ENCODE measurements at regions of chr9 and their contacts with region 1.

Region 1: DNA sequence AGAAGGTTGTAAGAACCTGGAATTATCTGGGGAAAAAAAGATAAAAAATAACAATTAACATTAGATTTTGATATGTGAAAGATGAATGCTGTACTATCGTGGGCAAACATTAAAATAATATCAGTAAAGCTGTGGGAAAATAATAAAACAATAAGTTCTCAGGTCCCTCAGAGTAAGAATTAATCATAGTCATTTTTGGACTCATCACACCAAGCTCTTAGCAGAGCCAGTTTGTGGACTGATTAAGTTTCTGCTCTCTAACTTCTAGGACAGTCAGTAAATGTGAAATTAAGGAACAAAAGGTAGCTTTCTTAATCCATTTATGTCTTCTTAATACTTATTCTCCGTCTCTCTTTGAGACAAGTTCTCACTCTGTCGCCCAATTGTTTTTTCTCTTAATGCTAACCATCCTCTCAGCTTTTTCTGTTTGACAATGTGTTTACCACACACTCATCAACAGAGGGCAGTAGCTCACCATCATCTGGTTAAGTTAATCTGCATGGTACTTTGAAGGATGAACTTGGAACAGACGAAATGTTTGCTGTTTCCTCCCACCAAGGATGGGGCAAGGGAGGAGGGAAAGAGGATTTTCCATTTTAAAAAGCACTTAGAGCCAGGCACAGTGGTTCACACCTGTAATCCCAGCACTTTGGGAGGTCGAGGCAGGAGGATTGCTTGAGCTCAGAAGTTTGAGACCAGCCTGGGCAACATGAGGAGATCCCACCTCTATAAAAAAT is 5.3 kb upstream of the ACO1 start:
- DNase-seq: no peak
- ATAC-seq: peak; percentile 84 to 85
- H3K4me3 ChIP-seq: no peak overlapping the region
- H3K27ac ChIP-seq: no peak overlapping the region
- H3K4me1 ChIP-seq: no peaks in the 10 kb centered on the region
- H3K27me3 ChIP-seq: peaks cover 2% of the 10 kb centered on the region

Region 2: GRCh38 chr9:32180597-32180996 is 198.6 kb before region 1 on chr9:
- intact Hi-C with region 1: no loop called
- DNase-seq: no peak
- ATAC-seq: peak; percentile 62 to 80
- H3K4me3 ChIP-seq: no peak overlapping the region
- H3K27ac ChIP-seq: no peak overlapping the region
- H3K4me1 ChIP-seq: no peaks in the 10 kb centered on the region
- H3K27me3 ChIP-seq: no peaks in the 10 kb centered on the region

Region 3: DNA sequence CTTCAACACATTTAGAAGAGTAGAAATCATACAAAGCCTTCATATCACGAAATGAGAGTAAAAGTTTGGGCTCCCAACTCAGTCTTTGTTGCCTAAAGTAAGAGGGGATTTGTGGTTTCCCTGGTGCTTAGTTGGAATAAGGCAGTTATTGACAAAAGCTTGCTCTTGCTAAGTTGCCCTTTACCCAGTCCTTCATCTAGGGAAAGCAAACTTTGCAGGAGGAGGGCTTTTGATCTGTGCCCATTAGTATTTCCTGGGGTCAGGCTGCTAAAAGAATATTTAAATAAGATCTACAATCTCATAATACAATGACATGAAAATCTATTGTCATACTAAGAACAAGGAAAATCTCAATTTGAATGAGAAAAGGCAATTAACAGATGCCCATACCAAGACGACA is 78.8 kb before region 1 on chr9:
- intact Hi-C with region 1: no loop called
- DNase-seq: no peak
- ATAC-seq: no peak
- H3K4me3 ChIP-seq: no peak overlapping the region
- H3K27ac ChIP-seq: no peak overlapping the region
- H3K4me1 ChIP-seq: no peaks in the 10 kb centered on the region
- H3K27me3 ChIP-seq: no peaks in the 10 kb centered on the region

Region 4: DNA sequence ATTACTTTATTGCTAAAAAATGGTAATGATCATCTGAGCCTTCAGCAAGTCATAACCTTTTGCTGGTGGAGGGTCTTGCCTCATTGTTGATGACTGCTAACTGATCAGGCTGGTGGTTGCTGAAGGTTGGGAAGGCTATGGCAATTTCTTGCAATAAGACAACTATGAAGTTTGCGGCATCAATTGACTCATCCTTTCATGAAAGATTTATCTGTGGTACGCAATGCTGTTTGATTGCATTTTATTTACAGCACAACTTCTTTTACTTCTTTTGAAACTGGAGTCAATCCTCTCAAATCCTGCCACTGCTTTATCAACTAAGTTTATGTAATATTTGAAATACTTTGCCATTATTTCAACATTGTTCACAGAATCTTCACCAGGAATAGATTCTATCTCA is 53.0 kb before region 1 on chr9:
- intact Hi-C with region 1: no loop called
- DNase-seq: no peak
- ATAC-seq: no peak
- H3K4me3 ChIP-seq: no peak overlapping the region
- H3K27ac ChIP-seq: no peak overlapping the region
- H3K4me1 ChIP-seq: no peaks in the 10 kb centered on the region
- H3K27me3 ChIP-seq: no peaks in the 10 kb centered on the region

Region 5: GRCh38 chr9:32431940-32432555 is 52.9 kb after region 1 on chr9:
- intact Hi-C with region 1: loop called in 3 of 4 experiments (anchors 5 kb)
- DNase-seq: peak; percentile 40 to 72 (median 63)
- ATAC-seq: peak in 1 of 2 donors; percentile 67
- H3K4me3 ChIP-seq: no peak overlapping the region
- H3K27ac ChIP-seq: no peak overlapping the region
- H3K4me1 ChIP-seq: no peaks in the 10 kb centered on the region
- H3K27me3 ChIP-seq: no peaks in the 10 kb centered on the region

Region 6: GRCh38 chr9:32487981-32488380 is 108.8 kb after region 1 on chr9:
- intact Hi-C with region 1: no loop called
- DNase-seq: no peak
- ATAC-seq: no peak
- H3K4me3 ChIP-seq: no peak overlapping the region
- H3K27ac ChIP-seq: no peak overlapping the region
- H3K4me1 ChIP-seq: no peaks in the 10 kb centered on the region
- H3K27me3 ChIP-seq: no peaks in the 10 kb centered on the region

Region 7: DNA sequence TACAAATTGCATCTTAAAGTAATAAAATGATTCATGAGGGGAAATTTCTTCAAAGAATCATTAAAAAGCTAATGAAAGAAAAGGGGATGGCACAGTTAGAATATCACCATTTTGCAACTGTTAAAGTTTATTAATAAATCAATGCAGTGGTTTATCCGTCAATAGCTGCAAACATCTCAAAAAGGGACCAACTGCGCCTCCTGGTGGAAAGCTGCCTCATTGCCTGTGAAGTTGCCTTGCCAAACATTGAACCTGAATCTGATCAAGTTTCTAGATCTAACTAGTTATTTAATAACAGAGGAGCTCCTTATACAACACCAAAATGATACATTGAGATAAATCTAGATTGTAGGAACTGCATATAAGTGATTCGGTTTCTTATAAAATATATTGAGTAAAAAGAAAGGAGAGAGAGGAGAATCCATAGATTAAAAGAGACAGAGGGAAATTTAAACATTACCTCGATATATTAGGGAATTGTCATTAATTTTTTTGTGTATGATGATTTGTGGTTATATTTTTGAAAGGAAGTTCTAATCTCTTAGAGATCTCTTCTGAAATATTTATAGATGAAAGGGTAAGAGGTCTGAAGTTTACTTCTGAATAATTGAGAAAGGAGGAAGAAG is 200.7 kb after region 1 on chr9:
- intact Hi-C with region 1: loop called (anchors 2 to 5 kb)
- DNase-seq: peak; percentile 66 to 87 (median 75)
- ATAC-seq: peak in 1 of 2 donors; percentile 45
- H3K4me3 ChIP-seq: no peak overlapping the region
- H3K27ac ChIP-seq: no peak overlapping the region
- H3K4me1 ChIP-seq: no peaks in the 10 kb centered on the region
- H3K27me3 ChIP-seq: no peaks in the 10 kb centered on the region